Common myeloid progenitor, CD34-positive (primary cell): ENCODE measurements at regions of chr20 and their contacts with region 1.

Region 1: DNA sequence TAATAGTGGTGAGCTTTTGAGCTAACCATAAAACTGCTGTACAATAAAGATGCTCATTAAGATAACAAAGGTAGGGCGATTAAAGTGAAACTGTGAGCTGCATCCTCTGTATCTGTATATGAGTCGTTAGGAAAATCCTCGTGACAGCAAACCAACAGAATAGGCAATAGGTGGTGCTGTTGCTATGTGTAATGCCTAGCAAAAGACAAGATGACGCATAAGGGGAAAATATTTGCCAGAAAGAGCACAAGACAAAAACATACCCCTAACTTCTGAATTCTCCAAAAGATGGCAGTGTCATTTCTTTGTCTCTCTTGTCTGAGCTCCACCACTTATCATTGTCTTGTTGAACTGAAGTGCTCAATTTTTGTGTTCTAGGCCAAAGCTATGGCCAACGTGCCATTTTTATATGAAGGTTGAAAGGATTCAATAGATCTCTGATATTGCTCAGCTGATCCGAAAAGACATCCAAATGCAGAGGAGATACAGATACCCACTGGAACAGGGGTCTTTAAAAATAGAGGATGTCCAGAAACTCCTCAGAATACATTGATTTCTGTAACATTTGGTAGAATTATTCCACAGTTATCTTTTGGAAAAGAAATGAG is 56.3 kb upstream of the ANKEF1 start:
- DNase-seq: peak; percentile 86 to 91 (median 91)
- H3K4me3 ChIP-seq: peak overlapping the region in 1 of 7 experiments; percentile 51
- H3K27ac ChIP-seq: no peak overlapping the region
- H3K4me1 ChIP-seq: peaks cover 0 to 2% (median 0%) of the 10 kb centered on the region in 4 experiments
- H3K27me3 ChIP-seq: peaks cover 0 to 3% (median 0%) of the 10 kb centered on the region in 5 experiments

Region 2: DNA sequence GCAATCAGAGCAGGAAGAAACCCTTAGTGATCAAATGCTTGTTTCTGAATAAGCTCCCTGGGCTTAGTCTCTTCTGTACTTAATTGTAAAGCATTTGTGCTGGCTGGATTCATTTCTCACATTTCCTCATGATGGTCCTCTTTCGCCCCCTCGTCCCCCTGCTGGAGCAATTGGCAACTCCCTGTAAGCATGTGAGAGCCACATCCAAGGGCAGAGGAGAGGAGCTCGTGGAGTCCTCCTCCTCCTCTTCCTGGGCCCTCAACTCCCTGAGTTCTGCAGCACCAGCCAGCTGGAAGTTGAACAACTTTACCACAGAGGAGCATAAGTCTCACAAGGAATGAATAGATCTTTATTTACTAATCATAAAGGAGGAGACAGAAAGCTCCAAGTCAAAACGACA is 68.9 kb after region 1 on chr20:
- CTCF ChIA-PET with region 1: interaction called, 14 read pairs
- POLR2A ChIA-PET with region 1: no interaction called
- DNase-seq: peak in 2 of 3 donors; percentile 30 to 31
- H3K4me3 ChIP-seq: no peak overlapping the region
- H3K27ac ChIP-seq: no peak overlapping the region
- H3K4me1 ChIP-seq: no peaks in the 10 kb centered on the region
- H3K27me3 ChIP-seq: no peaks in the 10 kb centered on the region

Region 3: GRCh38 chr20:10225439-10226060 is 247.0 kb after region 1 on chr20:
- CTCF ChIA-PET with region 1: interaction called, 15 read pairs
- POLR2A ChIA-PET with region 1: no interaction called
- DNase-seq: peak; percentile 71 to 92 (median 86)
- H3K4me3 ChIP-seq: no peak overlapping the region
- H3K27ac ChIP-seq: no peak overlapping the region
- H3K4me1 ChIP-seq: peaks cover 0 to 21% (median 4%) of the 10 kb centered on the region in 4 experiments
- H3K27me3 ChIP-seq: no peaks in the 10 kb centered on the region

Region 4: GRCh38 chr20:10427060-10427692 is 448.7 kb after region 1 on chr20:
- CTCF ChIA-PET with region 1: interaction called, 70 read pairs
- POLR2A ChIA-PET with region 1: no interaction called
- DNase-seq: peak; percentile 61 to 76 (median 74)
- H3K4me3 ChIP-seq: no peak overlapping the region
- H3K27ac ChIP-seq: no peak overlapping the region
- H3K4me1 ChIP-seq: peaks cover 0 to 20% (median 7%) of the 10 kb centered on the region in 4 experiments
- H3K27me3 ChIP-seq: no peaks in the 10 kb centered on the region